ENCODE measurements at regions of chr3 and their contacts with region 1.

Region 1: GRCh38 chr3:63993653-63994079 is 29.6 kb downstream of the PSMD6 start:
- DNase-seq: peak; percentile 64 to 68
- ATAC-seq: peak; percentile 99
- H3K4me3 ChIP-seq: no peak overlapping the region
- H3K27ac ChIP-seq: no peak overlapping the region
- H3K4me1 ChIP-seq: no peaks in the 10 kb centered on the region
- CTCF ChIP-seq: peak; percentile 56
- EP300 ChIP-seq: no peak
- POLR2A ChIP-seq: no peak
- RAD21 ChIP-seq: peak; percentile 62 to 73

Region 2: GRCh38 chr3:63349583-63350521 is 643.8 kb before region 1 on chr3:
- CTCF ChIA-PET with region 1: interaction called, 10 read pairs
- POLR2A ChIA-PET with region 1: no interaction called
- DNase-seq: peak; percentile 5 to 49
- ATAC-seq: peak; percentile 74 to 86; a peak in 4 of 6 replicates
- H3K4me3 ChIP-seq: no peak overlapping the region
- H3K27ac ChIP-seq: no peak overlapping the region
- H3K4me1 ChIP-seq: no peaks in the 10 kb centered on the region
- CTCF ChIP-seq: peak; percentile 65
- EP300 ChIP-seq: no peak
- POLR2A ChIP-seq: no peak
- RAD21 ChIP-seq: peak; percentile 59 to 63

Region 3: DNA sequence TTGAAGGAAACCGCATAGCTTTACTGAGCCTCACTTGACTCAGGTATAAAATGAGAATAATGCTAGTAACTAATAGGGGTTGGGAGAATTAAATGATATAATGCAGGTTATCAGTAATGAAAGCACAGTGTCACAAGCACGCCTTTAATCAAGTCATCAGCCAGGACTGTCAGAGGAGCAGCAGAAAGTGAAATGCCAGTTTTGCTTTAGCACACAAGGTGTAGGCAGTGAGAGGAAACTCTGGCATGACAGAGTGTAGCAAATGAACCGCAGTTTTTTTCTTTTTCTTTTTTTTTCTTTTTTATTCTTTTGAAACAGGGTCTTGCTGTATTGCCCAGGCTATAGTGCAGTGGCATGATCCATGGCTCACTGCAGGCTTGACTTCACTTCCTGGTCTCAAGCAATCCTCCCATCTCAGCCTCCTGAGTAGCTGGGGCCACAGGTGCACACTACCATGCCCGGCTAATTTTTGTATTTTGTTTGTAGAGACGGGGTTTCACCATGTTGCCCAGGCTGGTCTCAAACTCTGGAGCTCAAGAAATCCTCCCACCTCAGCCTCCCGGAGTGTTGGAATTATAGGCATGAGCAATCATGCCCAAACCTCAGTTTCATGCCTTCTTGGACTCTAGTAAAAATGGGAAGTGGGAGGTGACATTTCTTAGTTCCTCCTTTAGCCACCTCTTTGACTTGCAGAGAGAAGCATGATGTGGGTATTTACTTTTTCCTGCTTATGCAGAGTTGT is 71.8 kb before region 1 on chr3:
- CTCF ChIA-PET with region 1: no interaction called
- POLR2A ChIA-PET with region 1: no interaction called
- DNase-seq: no peak
- ATAC-seq: no peak
- H3K4me3 ChIP-seq: no peak overlapping the region
- H3K27ac ChIP-seq: no peak overlapping the region
- H3K4me1 ChIP-seq: peaks cover 18% of the 10 kb centered on the region
- CTCF ChIP-seq: no peak
- EP300 ChIP-seq: no peak
- POLR2A ChIP-seq: no peak
- RAD21 ChIP-seq: no peak

Region 4: DNA sequence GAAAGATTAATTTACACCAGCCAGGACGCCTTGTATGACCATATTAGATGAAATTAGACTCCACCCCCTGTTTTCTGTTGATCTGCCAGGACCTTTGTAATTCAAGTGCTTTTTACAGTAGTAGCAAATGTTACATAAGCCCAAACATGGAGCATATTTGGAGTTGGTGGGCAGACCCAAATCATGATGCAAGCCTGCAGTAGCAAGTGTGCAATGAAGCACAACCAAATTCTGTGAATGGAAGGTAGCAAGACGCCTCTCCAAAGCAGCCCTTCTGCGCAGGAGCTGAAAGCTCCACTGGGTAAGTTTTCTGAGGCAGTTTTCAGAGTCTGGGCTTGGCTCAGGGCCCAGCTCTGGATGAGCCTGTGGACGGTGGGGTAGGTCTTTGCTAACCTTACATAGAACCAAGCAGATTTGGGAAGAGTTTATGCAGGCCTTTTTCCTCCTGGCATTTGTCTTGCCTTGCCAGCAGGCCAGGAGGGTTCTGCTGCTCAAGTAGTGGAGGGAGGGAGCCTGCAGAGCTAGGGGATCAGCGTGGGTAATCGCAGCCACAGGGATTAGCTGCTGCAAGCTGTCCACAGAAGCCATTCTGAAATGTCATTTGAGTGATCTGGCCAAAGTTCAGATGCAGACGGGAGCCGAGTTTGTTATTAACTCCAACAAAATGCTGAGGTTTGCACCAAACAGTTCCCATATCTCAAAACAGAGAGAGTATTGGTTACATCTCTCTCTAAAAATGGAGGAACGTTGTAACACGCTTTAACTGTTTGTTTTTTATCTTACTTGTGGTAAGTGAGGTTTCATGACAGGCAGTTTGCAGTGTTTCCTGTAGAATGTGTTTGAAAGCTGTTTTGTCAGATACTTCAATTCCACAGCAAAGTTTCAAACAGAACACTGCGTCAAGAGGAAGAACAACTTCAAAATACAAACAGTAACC is 25.7 kb before region 1 on chr3:
- CTCF ChIA-PET with region 1: interaction called, 18 read pairs
- POLR2A ChIA-PET with region 1: no interaction called
- DNase-seq: no peak
- ATAC-seq: peak; percentile 59 to 77; a peak in 4 of 6 replicates
- H3K4me3 ChIP-seq: 0 out of 3 replicates have a peak overlapping the region, but pooled peaks have one; percentile 5
- H3K27ac ChIP-seq: peak overlapping the region in 1 of 2 experiments; percentile 62; a peak in 2 of 6 replicates
- H3K4me1 ChIP-seq: peaks cover 36% of the 10 kb centered on the region
- CTCF ChIP-seq: no peak
- EP300 ChIP-seq: no peak
- POLR2A ChIP-seq: no peak
- RAD21 ChIP-seq: no peak

Region 5: DNA sequence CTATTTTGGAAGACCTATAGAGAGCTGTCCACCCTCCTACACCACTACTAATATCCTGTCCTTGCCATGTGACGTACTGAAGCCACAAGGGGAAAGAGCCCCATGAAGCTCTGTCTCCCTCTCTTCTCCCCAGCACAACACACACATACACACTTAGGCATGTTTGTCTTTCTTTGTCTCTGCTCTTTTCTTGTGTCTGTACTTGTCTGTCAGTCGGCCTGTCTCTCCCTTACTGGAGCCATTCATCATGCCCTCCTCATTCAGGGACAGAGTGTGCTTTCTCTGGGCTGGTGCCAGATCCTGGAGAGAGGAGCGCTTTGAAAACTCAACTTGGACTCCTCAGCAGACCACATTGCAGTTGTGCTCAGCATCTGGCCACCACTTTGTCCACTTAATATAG is 17.9 kb before region 1 on chr3:
- CTCF ChIA-PET with region 1: interaction called, 33 read pairs
- POLR2A ChIA-PET with region 1: no interaction called
- DNase-seq: no peak
- ATAC-seq: no peak
- H3K4me3 ChIP-seq: no peak overlapping the region
- H3K27ac ChIP-seq: no peak overlapping the region; a peak in 1 of 6 replicates
- H3K4me1 ChIP-seq: peaks cover 25% of the 10 kb centered on the region; the same call in 2 of the 3 replicates
- CTCF ChIP-seq: no peak
- EP300 ChIP-seq: no peak
- POLR2A ChIP-seq: no peak
- RAD21 ChIP-seq: no peak

Region 6: DNA sequence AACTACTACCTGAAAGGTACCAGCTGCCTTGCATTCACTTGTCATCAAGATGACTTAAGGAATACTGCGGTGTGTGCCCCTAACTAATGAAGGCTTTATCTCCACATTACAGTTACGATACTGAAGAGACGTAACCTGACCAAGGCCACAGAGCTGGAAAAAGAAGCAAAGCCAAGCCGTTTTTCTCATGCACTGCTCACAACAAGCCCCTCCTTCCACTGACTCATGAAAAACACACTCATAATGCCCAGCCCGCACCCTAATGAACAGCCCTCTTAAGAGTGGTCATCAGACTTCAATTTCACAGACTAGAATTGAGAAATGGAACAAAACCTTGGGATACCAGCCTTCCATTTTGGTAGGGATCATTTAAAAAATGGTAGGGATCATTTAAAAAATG is 18.0 kb after region 1 on chr3:
- CTCF ChIA-PET with region 1: interaction called, 12 read pairs
- POLR2A ChIA-PET with region 1: interaction called, 11 read pairs
- DNase-seq: no peak
- ATAC-seq: peak in 1 of 2 experiments; percentile 36; a peak in 1 of 6 replicates
- H3K4me3 ChIP-seq: no peak overlapping the region
- H3K27ac ChIP-seq: no peak overlapping the region
- H3K4me1 ChIP-seq: peaks cover 7% of the 10 kb centered on the region; the same call in 1 of the 3 replicates
- CTCF ChIP-seq: no peak
- EP300 ChIP-seq: no peak
- POLR2A ChIP-seq: no peak
- RAD21 ChIP-seq: no peak

Region 7: GRCh38 chr3:64121750-64122311 is 128.2 kb after region 1 on chr3:
- CTCF ChIA-PET with region 1: no interaction called
- POLR2A ChIA-PET with region 1: no interaction called
- DNase-seq: no peak
- ATAC-seq: peak in 1 of 2 experiments; percentile 43; a peak in 2 of 6 replicates
- H3K4me3 ChIP-seq: no peak overlapping the region
- H3K27ac ChIP-seq: peak overlapping the region in 1 of 2 experiments; percentile 44; a peak in 1 of 6 replicates
- H3K4me1 ChIP-seq: peaks cover 16% of the 10 kb centered on the region
- CTCF ChIP-seq: no peak
- EP300 ChIP-seq: no peak
- POLR2A ChIP-seq: no peak
- RAD21 ChIP-seq: no peak